ENCODE measurements at regions of chr14 and their contacts with region 1.

Region 1: DNA sequence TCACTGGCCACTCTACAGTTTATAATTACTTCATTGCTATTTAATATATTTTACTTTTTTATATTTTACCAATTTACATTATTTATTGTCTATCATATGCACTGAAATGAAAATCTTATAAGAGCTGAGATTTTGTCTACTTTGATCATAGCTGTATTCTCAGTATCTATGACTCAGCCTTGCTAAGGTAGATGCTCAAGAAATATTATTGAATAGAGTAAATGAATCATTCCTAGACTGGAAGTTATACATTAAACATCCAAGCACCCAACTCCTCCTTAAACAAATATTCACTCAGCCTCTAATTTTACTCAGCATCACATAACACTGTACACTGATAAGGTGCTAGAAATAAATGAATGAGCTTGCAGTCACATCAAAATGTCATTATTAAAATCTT is 1424.9 kb downstream of the LRFN5 start:
- DNase-seq: no peak
- H3K4me3 ChIP-seq: no peak overlapping the region
- H3K27ac ChIP-seq: no peak overlapping the region
- H3K4me1 ChIP-seq: no peaks in the 10 kb centered on the region
- H3K27me3 ChIP-seq: no peaks in the 10 kb centered on the region
- CTCF ChIP-seq: no peak
- POLR2A ChIP-seq: no peak

Region 2: DNA sequence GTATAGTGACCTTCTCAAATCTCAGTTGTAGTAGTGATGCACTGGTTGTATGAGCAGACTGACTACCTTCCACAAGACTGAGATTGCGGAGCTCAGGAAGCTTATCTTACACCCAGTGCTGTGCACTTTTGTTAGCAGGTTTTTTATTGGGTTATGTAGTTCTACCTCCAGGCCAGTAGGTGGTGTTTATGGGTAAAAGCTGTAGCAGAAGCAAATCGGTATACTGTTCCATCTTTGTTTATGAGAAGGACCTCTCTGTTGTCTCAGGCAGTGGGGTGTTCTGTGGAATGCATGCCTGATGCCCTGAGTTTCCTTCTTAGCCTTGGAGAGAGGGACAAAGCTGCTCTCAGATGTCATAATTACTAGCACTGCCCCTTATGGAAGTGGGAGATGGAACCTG is 1207.1 kb before region 1 on chr14:
- intact Hi-C with region 1: no loop called
- DNase-seq: no peak
- H3K4me3 ChIP-seq: no peak overlapping the region
- H3K27ac ChIP-seq: no peak overlapping the region
- H3K4me1 ChIP-seq: no peaks in the 10 kb centered on the region
- H3K27me3 ChIP-seq: no peaks in the 10 kb centered on the region
- CTCF ChIP-seq: no peak
- POLR2A ChIP-seq: no peak

Region 3: DNA sequence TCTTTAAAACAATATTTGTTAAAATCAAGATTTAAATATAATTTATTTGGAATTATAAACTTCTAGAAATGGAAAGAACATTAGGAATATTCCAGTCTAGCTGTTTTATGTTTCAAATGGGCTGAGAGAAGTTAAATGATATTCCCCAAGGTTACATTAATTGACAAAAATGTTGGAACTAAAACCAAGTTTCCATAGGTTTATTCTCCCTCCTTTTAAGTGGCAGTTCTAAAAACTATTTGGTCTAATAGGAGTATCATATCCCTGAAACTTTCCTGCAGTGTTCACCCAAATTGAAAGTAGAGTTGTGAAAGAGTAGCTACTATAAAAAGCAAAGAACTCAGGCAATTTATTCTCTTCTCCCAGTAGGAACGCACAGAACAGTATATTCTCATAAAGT is 239.4 kb before region 1 on chr14:
- intact Hi-C with region 1: no loop called
- DNase-seq: no peak
- H3K4me3 ChIP-seq: no peak overlapping the region
- H3K27ac ChIP-seq: no peak overlapping the region
- H3K4me1 ChIP-seq: no peaks in the 10 kb centered on the region
- H3K27me3 ChIP-seq: no peaks in the 10 kb centered on the region
- CTCF ChIP-seq: no peak
- POLR2A ChIP-seq: no peak

Region 4: DNA sequence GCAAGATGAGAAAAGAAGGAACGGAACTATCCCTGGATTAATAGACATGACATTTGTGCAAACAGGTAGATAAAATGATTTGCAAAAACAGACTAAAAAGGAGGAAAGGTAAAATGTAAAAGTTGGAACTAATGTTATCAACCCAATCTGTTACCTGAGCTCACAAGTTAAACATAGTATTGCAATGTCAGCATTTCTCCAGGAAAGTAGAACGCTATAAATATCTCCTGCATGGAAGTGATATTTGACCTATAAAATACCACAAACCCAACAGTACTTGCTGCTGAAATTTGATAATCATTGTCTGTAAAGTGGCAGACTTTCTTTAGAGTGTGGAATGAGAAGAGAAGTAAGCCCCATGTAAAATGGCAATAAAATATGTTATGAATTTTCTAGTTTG is 10.8 kb after region 1 on chr14:
- intact Hi-C with region 1: loop called (anchors 2 kb)
- DNase-seq: no peak
- H3K4me3 ChIP-seq: no peak overlapping the region
- H3K27ac ChIP-seq: no peak overlapping the region
- H3K4me1 ChIP-seq: no peaks in the 10 kb centered on the region
- H3K27me3 ChIP-seq: no peaks in the 10 kb centered on the region
- CTCF ChIP-seq: no peak
- POLR2A ChIP-seq: no peak

Measured in breast epithelium (tissue), 4 donors.